ENCODE measurements at regions of chr16 and their contacts with region 1.

Region 1: DNA sequence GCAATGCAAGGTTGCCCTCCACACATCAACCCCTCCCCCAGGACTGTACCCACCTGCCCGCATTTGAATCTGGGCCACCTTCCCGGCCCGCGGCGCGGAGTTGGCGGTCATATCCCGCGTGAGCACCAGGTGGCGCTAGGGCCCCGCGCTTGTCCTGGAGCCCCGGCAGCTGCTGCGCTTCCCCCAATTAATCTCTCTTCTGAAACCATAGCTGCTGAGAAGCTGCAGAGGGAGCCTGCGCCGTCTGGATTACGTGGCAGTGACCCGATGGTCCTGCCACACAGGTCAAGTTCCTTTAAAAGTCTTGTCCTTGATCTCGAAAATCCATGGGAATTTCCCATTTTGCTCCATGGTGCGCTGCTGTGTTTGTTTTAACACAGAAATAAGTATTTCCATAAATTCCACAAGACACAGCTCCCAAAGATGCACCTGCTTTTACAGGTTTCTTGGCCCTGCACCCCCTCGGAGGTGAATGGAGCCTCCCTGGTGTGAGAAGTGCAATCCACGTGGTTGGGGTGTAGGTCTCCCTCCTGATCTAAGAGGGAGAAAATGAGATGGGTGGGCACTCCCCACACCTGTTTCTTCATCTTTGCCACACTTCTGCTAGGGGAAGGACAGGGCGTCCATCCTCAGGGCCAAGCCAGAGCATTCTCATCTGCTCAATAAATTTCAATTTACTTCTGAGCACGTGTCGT is 22.1 kb downstream of the COX4I1 start:
- DNase-seq: peak; percentile 66 to 79 (median 68)
- H3K4me3 ChIP-seq: no peak overlapping the region
- H3K4me3 Mint-ChIP-seq: no peak overlapping the region
- H3K27ac ChIP-seq: no peak overlapping the region
- H3K27ac Mint-ChIP-seq: no peak overlapping the region
- H3K4me1 ChIP-seq: peaks cover 8% of the 10 kb centered on the region
- H3K4me1 Mint-ChIP-seq: peaks cover 0 to 4% (median under 1%) of the 10 kb centered on the region in 4 donors
- H3K27me3 ChIP-seq: no peaks in the 10 kb centered on the region
- H3K27me3 Mint-ChIP-seq: peaks cover 2 to 3% of the 10 kb centered on the region in 2 donors

Region 2: DNA sequence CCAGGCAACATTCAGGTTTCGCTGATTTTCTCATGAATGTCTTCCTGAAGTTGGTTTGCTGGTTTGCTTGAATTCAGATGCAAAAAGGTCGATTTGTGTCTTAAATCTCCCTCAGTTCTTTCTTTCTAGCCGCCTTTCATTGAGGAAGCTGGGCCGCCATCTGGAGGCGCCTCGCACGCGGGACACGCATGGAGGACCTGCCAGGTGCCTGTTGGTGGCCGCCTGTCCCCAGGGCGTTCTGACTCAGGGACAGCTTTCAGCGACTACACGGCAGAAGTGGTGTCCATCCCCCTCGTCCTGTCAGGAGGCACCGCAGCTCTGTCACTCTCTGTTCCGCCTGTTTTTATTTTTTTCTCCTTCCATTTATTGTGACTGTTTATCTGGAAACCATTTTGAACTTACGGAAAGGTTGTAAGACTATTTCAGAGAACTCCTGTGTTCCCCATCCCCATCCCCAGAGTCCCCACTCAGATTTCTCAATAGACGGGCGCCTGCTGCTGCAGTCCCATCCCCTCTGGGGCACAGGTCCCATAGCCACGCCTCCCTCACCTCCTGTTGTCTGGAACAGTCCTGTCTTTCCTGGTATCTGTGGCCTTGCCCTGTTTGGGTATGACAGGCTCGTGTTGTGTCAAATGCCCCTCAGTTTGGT is 11.1 kb after region 1 on chr16:
- CTCF ChIA-PET with region 1: interaction called, 26 read pairs
- POLR2A ChIA-PET with region 1: no interaction called
- intact Hi-C with region 1: no loop called
- DNase-seq: no peak
- H3K4me3 ChIP-seq: no peak overlapping the region
- H3K4me3 Mint-ChIP-seq: no peak overlapping the region
- H3K27ac ChIP-seq: no peak overlapping the region
- H3K27ac Mint-ChIP-seq: no peak overlapping the region
- H3K4me1 ChIP-seq: no peaks in the 10 kb centered on the region
- H3K4me1 Mint-ChIP-seq: peaks cover 0 to 12% (median 2%) of the 10 kb centered on the region in 4 donors
- H3K27me3 ChIP-seq: peaks cover 12% of the 10 kb centered on the region
- H3K27me3 Mint-ChIP-seq: peaks cover 21 to 26% of the 10 kb centered on the region in 2 donors

Region 3: GRCh38 chr16:85935974-85936760 is 114.6 kb after region 1 on chr16:
- CTCF ChIA-PET with region 1: interaction called, 9 read pairs
- POLR2A ChIA-PET with region 1: no interaction called
- intact Hi-C with region 1: loop called (anchors 2 kb)
- DNase-seq: peak; percentile 68 to 83 (median 77)
- H3K4me3 ChIP-seq: peak overlapping the region; percentile 28 to 49
- H3K4me3 Mint-ChIP-seq: peak overlapping the region; percentile 69 to 91 (median 76)
- H3K27ac ChIP-seq: peak overlapping the region; percentile 55
- H3K27ac Mint-ChIP-seq: peak overlapping the region; percentile 85 to 98 (median 95)
- H3K4me1 ChIP-seq: peaks cover 34% of the 10 kb centered on the region
- H3K4me1 Mint-ChIP-seq: peaks cover 28 to 52% (median 37%) of the 10 kb centered on the region in 4 donors
- H3K27me3 ChIP-seq: no peaks in the 10 kb centered on the region
- H3K27me3 Mint-ChIP-seq: no peaks in the 10 kb centered on the region

Region 4: GRCh38 chr16:85979605-85980004 is 158.0 kb after region 1 on chr16:
- CTCF ChIA-PET with region 1: interaction called, 276 read pairs
- POLR2A ChIA-PET with region 1: no interaction called
- intact Hi-C with region 1: no loop called
- DNase-seq: no peak
- H3K4me3 ChIP-seq: no peak overlapping the region
- H3K4me3 Mint-ChIP-seq: no peak overlapping the region
- H3K27ac ChIP-seq: no peak overlapping the region
- H3K27ac Mint-ChIP-seq: peak overlapping the region in 1 of 7 donors; percentile 48
- H3K4me1 ChIP-seq: no peaks in the 10 kb centered on the region
- H3K4me1 Mint-ChIP-seq: peaks cover 0 to 2% (median under 1%) of the 10 kb centered on the region in 4 donors
- H3K27me3 ChIP-seq: no peaks in the 10 kb centered on the region
- H3K27me3 Mint-ChIP-seq: peaks cover 2 to 7% of the 10 kb centered on the region in 2 donors

Region 5: DNA sequence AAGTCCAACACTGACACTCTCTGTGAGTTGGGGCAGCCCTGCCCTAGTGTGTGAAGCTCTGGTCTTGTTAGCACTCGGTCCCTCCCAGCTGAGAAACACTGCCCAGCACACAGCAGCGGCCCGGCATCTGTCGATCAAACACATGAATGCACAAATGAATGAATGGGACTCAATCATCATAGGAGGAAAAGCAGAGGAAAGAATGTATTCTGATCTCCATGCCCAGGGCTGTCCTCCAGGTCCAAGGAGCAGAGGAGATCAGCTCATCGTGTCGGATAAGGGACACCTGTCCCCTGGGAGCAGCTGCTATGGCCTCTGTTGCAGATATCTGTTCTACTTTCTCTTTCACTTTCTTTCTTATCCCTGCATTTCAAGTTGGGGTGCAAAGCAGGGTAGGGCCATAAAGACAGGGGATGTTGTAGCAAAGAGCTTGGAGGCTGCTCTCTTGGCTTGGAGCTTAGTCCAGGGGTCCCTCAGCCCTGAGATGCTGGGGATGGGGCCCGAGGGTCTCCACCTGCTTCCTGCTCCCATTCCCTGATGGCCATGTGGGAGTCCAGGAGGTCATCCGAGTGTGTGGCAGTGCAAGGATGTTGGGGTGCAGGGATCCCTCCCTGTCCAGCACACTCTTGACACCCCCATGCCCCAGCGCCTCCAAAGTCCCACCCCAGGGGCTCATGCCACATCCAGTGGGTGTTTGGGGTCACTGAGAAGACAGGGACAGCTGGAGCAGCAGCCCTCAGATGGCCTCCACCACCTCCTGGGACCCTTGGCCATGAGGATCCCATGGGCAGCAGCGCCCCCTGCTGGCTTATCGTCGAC is 165.6 kb after region 1 on chr16:
- CTCF ChIA-PET with region 1: interaction called, 276 read pairs
- POLR2A ChIA-PET with region 1: interaction called, 6 read pairs
- intact Hi-C with region 1: loop called (anchors 1 kb)
- DNase-seq: peak in 2 of 5 donors; percentile 16 to 28
- H3K4me3 ChIP-seq: no peak overlapping the region
- H3K4me3 Mint-ChIP-seq: peak overlapping the region in 2 of 8 donors; percentile 12 to 16
- H3K27ac ChIP-seq: no peak overlapping the region
- H3K27ac Mint-ChIP-seq: no peak overlapping the region
- H3K4me1 ChIP-seq: peaks cover 6% of the 10 kb centered on the region
- H3K4me1 Mint-ChIP-seq: peaks cover 7 to 40% (median 21%) of the 10 kb centered on the region in 4 donors
- H3K27me3 ChIP-seq: peaks cover 5% of the 10 kb centered on the region
- H3K27me3 Mint-ChIP-seq: peaks cover 17 to 20% of the 10 kb centered on the region in 2 donors

Region 6: GRCh38 chr16:86016201-86016871 is 194.7 kb after region 1 on chr16:
- CTCF ChIA-PET with region 1: interaction called, 162 read pairs
- POLR2A ChIA-PET with region 1: interaction called, 8 read pairs
- intact Hi-C with region 1: loop called (anchors 1 kb)
- DNase-seq: peak in 4 of 5 donors; percentile 42 to 45 (median 43)
- H3K4me3 ChIP-seq: no peak overlapping the region
- H3K4me3 Mint-ChIP-seq: no peak overlapping the region
- H3K27ac ChIP-seq: no peak overlapping the region
- H3K27ac Mint-ChIP-seq: no peak overlapping the region
- H3K4me1 ChIP-seq: no peaks in the 10 kb centered on the region
- H3K4me1 Mint-ChIP-seq: no peaks in the 10 kb centered on the region
- H3K27me3 ChIP-seq: no peaks in the 10 kb centered on the region
- H3K27me3 Mint-ChIP-seq: peaks cover 20 to 25% of the 10 kb centered on the region in 2 donors

Measured in CD4-positive, alpha-beta memory T cell (primary cell).